ENCODE measurements at regions of chr1 and their contacts with region 1.

Region 1: GRCh38 chr1:12454406-12455391 is 163.3 kb downstream of the DHRS3 start:
- DNase-seq: no peak
- ATAC-seq: peak in 2 of 4 donors; percentile 10 to 23
- H3K4me3 ChIP-seq: no peak overlapping the region
- H3K27ac ChIP-seq: peak overlapping the region; percentile 47 to 84 (median 66)
- H3K4me1 ChIP-seq: peaks cover 0 to 64% (median 28%) of the 10 kb centered on the region in 4 donors
- H3K27me3 ChIP-seq: no peaks in the 10 kb centered on the region
- CTCF ChIP-seq: no peak
- POLR2A ChIP-seq: no peak

Region 2: DNA sequence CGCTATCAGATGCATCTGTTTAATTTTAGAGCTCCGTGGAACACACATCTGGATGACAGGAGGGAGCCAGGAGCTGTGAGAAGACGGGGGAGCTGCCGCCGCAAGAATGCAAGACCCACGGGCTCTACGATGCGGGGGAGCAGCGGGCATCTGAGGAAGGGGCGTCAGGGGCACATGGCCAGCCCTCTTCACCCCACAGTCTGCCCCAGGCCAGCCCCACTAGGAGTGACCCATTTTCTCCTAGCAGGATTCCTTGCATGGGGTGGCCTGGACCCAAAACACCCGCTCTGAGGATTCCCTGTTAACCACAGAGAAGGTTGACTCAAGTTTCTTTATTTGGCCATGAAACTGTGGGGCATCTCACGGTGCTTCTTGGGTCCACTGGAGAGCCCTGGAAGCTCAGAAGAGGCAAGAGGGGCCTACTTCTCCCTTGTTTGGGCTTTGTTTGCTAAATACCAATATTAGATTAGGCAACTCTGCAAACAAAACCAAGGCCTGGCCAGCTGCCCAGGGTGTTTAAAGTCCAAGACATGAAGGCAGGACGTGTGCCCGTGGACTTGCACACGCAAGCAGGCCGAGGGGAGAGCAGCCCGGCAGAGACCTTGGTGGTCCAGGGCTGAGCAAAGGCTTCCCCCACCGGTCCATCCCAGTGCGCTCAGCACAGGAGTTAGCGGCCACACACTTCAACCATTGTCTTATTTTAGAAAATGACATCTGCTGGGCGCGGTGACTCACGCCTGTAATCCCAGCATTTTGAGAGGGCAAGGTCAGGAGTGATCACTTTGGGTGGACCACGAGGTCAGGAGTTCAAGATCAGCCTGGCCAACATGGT is 73.5 kb after region 1 on chr1:
- intact Hi-C with region 1: loop called (anchors 10 kb)
- DNase-seq: peak; percentile 90 to 94 (median 90)
- ATAC-seq: peak; percentile 45 to 62 (median 58)
- H3K4me3 ChIP-seq: peak overlapping the region; percentile 18 to 49 (median 48)
- H3K27ac ChIP-seq: peak overlapping the region; percentile 55 to 95 (median 80)
- H3K4me1 ChIP-seq: peaks cover 0 to 72% (median 17%) of the 10 kb centered on the region in 4 donors
- H3K27me3 ChIP-seq: no peaks in the 10 kb centered on the region
- CTCF ChIP-seq: no peak
- POLR2A ChIP-seq: peak; percentile 29

Region 3: DNA sequence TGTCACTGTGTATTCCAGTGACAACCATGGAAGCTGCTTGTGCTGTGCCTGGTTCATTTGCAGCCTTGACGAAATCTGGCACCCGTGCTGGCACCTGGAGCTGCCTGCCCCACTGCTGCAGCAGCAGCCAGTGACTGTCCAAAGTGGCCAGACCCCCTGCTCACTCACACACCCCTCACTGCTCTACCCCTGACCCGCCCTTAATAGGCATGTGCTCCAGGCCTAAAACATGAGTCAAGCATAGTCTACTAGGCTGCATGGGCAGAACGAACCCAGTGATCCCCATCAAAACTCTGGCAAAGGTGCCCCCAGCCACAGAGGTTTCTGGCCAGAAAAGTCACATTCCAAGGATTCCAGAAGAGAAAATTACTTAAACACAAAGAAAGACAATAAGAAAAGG is 344.2 kb after region 1 on chr1:
- intact Hi-C with region 1: no loop called
- DNase-seq: no peak
- ATAC-seq: no peak
- H3K4me3 ChIP-seq: no peak overlapping the region
- H3K27ac ChIP-seq: no peak overlapping the region
- H3K4me1 ChIP-seq: no peaks in the 10 kb centered on the region
- H3K27me3 ChIP-seq: no peaks in the 10 kb centered on the region
- CTCF ChIP-seq: no peak
- POLR2A ChIP-seq: no peak

Measured in right lobe of liver (tissue), 6 donors.